A673 (cell line): ENCODE measurements at regions of chr11 and their contacts with region 1.

Region 1: DNA sequence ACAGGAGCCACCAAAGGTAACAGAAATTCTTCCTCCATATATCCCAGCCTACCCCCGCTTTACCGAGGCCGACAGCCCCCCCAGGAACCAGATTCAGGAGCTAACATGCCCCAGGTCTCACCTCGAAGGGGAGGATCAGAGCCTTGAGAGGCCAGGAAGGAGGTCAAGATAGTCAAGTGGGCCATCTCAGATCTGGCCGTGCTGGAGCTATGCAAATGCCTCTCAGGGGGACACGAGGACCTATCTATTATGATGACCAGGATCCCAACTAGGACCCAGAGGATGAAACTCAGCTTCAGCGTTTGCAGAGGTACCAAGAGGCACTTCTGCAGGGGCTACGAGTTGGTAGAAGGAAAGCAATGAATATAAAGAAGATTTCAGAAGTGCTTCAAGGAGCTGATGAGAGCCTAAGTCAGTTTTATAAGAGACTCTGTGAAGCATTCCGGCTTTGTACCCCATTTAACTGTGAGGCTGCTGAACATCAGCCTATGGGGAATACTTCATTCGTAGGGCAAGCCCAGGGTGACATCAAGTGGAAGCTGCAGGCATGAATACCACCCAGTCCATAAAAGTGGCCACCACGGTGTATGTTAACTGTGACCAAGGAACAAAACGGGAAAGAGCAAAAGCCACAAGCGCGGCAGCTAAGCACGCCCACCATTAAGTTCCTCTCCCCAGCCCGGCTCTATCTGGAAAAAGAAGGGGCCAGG is 27.7 kb upstream of the CPT1A start:
- DNase-seq: peak; percentile 42
- H3K4me3 ChIP-seq: peak overlapping the region; percentile 36
- H3K27ac ChIP-seq: no peak overlapping the region
- H3K4me1 ChIP-seq: peaks cover 3% of the 10 kb centered on the region
- H3K27me3 ChIP-seq: no peaks in the 10 kb centered on the region
- CTCF ChIP-seq: peak; percentile 45; the same call in 1 of the 2 replicates

Region 2: GRCh38 chr11:68780829-68781228 is 88.6 kb before region 1 on chr11:
- CTCF ChIA-PET with region 1: no interaction called
- POLR2A ChIA-PET with region 1: interaction called, 10 read pairs
- intact Hi-C with region 1: no loop called
- DNase-seq: peak; percentile 53
- H3K4me3 ChIP-seq: no peak overlapping the region
- H3K27ac ChIP-seq: no peak overlapping the region
- H3K4me1 ChIP-seq: no peaks in the 10 kb centered on the region
- H3K27me3 ChIP-seq: no peaks in the 10 kb centered on the region
- CTCF ChIP-seq: no peak

Region 3: DNA sequence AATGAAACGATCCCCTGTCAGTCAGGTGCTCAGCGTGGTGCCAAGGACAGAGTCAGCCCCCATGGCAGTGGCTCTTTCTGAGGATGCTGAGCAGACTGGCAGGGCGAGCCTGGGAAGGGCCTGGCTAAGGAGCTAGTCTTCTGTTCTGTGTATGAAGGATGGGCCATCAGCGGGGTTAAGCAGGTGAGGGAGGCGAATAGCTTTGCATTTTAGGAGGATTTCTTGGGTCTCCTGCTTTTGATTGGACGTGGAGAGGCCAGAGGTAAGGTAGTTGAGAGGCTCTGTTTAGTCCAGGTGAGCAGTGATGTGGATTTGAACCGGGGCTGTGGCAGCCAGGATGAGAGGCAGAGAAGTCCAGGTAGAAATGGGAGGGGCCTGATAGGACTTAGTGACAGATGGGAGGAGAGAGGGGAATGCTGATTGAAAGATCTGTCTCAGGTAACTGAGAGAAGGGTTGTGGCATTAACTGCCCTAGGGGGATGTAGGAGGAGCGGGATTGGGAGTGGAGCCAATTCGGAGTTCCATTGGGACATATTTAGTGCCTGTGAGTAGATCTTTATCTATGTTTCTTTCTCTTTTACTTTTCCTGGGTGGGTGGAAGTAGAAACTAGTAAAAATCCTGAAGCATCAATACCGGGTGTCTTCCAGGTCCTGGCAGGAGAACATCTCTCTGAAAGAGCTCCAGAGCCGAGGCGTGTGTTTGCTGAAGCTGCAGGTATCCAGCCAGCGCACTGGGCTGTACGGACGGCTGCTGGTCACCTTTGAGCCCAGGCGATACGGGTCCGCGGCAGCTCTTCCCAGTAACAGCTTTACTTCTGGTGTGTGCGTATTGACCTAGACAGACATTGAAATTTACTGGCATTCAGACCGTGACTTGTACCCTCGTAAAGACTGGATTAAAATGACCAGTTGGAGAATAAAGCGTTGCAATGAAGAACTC is 36.3 kb after region 1 on chr11:
- CTCF ChIA-PET with region 1: no interaction called
- POLR2A ChIA-PET with region 1: no interaction called
- intact Hi-C with region 1: no loop called
- DNase-seq: no peak
- H3K4me3 ChIP-seq: peak overlapping the region; percentile 93
- H3K27ac ChIP-seq: no peak overlapping the region
- H3K4me1 ChIP-seq: peaks cover 22% of the 10 kb centered on the region
- H3K27me3 ChIP-seq: no peaks in the 10 kb centered on the region
- CTCF ChIP-seq: no peak